ENCODE measurements at regions of chr20 and their contacts with region 1.

Region 1: DNA sequence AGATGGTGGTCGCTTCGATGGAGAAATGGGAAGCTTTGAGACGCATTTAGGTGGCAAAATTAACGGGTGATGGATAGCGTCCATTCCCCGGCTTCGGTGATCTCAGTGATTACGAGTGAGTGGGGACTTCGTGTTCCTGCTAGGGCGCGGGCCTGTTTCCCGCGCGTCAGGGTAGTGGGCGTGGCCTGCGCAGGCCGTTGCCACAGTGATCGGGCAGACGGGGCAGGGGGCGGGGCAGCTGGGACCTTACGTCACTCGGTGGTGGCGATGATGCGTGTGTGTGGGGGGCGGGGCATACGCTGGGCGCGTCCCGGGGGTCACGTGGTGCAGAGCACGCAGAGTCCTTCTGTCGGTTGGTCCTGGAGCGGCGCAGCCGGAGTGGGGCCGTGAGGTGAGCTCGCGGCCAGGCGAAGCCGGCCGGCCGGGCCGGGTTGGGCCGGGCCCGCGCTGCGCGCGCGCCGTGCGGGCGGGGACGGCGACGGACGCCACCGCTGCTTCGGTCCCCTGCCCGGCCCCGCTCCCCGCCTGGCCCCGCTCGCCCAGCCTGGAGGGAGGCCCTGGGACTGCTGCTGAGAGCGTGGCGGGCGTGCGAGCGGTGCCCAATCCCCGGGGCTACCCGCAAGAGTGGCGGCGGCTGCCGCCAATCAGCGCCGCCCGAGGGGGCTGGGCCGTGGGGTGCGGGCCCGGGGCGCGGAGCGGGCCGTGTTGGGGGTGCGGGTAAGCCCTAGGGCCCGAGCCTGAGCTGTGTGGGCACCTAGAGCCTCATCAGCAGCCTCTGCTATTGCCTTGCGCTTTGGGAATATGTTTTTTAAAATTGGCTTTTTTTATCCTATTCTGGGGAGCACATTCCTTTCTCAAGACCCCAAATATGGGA is at the start of gene PHF20:
- DNase-seq: peak; percentile 97 to 99 (median 99)
- H3K4me3 ChIP-seq: peak within 1 kb of the TSS; percentile 73 to 98 (median 94)
- H3K4me3 Mint-ChIP-seq: peak within 1 kb of the TSS; percentile 88 to 90
- H3K27ac ChIP-seq: peak within 1 kb of the TSS; percentile 87 to 95
- H3K27ac Mint-ChIP-seq: peak within 1 kb of the TSS; percentile 98 to 100 (median 99)
- H3K4me1 ChIP-seq: peaks cover 64 to 74% of the 10 kb centered on the region in 2 donors
- H3K4me1 Mint-ChIP-seq: peaks cover 72% of the 10 kb centered on the region
- H3K27me3 ChIP-seq: no peaks in the 10 kb centered on the region
- H3K27me3 Mint-ChIP-seq: peaks cover 0 to 6% (median 3%) of the 10 kb centered on the region in 3 donors
- CTCF ChIP-seq: no peak
- polyA plus RNA-seq, gene PHF20: 54.7 to 78.2 (median 73.6) TPM

Region 2: GRCh38 chr20:35729836-35730582 is 41.9 kb before region 1 on chr20:
- intact Hi-C with region 1: loop called in 1 of 2 experiments (anchors 5 kb)
- DNase-seq: no peak
- H3K4me3 ChIP-seq: no peak overlapping the region
- H3K4me3 Mint-ChIP-seq: no peak overlapping the region
- H3K27ac ChIP-seq: peak overlapping the region in 1 of 2 donors; percentile 32
- H3K27ac Mint-ChIP-seq: peak overlapping the region in 2 of 7 donors; percentile 20 to 32
- H3K4me1 ChIP-seq: no peaks in the 10 kb centered on the region
- H3K4me1 Mint-ChIP-seq: peaks cover 5% of the 10 kb centered on the region
- H3K27me3 ChIP-seq: no peaks in the 10 kb centered on the region
- H3K27me3 Mint-ChIP-seq: peaks cover 0 to 2% (median 0%) of the 10 kb centered on the region in 3 donors
- CTCF ChIP-seq: no peak

Region 3: DNA sequence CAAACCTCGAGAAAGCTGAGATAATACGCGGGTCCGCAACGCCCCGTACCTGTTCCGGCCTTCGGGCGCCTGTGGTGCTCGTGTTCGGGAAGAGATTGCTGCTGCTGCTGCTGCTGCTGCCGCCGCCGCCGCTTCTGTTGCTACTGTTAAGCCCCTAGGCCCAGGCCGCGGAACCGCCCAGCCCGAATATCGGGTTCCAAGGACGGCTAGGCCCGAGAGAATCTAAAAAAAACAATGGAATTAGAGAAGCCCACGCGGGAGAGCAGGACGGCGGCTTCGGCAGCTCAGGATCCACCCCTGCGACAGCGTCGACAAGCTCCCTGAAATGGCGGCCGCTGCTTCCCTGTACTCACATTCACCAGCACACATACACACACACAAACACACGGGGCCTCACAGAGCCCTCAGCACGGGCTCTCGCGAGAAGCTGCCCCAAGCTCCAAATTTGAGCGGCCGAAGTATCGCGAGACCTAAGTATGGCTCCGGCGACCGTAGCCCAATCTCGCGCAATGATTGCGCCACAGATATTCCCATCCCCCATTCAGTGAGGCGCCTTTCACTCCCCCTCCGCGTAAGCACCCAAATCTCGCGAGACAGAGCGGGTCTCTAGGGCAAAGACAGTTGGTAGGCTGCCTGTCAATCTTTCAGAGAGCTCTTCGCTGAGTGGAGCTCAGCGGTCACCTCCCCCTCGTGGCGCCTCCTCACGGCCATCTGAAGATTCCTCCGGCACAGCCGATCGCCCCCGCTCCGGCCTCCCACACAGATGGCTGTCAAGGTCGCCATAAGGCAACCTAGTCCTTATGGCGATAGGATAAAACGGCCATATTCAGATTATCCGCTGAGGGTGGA is 29.8 kb before region 1 on chr20 and contains the start of gene RBM39:
- intact Hi-C with region 1: loop called (anchors 1 kb)
- DNase-seq: peak; percentile 100
- H3K4me3 ChIP-seq: peak within 1 kb of the TSS; percentile 78 to 95 (median 91)
- H3K4me3 Mint-ChIP-seq: peak within 1 kb of the TSS; percentile 99 to 100
- H3K27ac ChIP-seq: peak within 1 kb of the TSS; percentile 99 to 100
- H3K27ac Mint-ChIP-seq: peak within 1 kb of the TSS; percentile 97 to 100 (median 100)
- H3K4me1 ChIP-seq: peaks cover 40 to 52% of the 10 kb centered on the region in 2 donors
- H3K4me1 Mint-ChIP-seq: peaks cover 42% of the 10 kb centered on the region
- H3K27me3 ChIP-seq: no peaks in the 10 kb centered on the region
- H3K27me3 Mint-ChIP-seq: no peaks in the 10 kb centered on the region
- CTCF ChIP-seq: no peak
- polyA plus RNA-seq, gene RBM39: 89.5 to 209 (median 98.0) TPM

Region 4: DNA sequence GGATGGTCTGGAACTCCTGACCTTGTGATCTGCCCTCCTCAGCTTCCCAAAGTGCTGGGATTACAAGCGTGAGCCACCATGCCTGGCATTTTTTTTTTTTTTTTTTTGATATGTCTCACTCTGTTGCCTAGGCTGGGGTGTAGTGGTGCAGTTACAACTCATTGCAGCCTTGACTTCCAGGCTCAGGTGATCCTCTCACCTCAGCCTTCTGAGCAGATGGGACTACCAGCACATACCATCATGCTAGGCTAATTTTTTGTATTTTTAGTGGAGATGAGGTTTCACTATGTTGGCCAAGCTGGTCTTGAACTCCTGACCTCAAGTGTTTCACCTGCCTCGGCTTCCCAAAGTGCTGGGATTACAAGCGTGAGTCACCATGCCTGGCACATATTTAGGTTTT is 34.1 kb after region 1 on chr20:
- intact Hi-C with region 1: no loop called
- DNase-seq: no peak
- H3K4me3 ChIP-seq: no peak overlapping the region
- H3K4me3 Mint-ChIP-seq: no peak overlapping the region
- H3K27ac ChIP-seq: no peak overlapping the region
- H3K27ac Mint-ChIP-seq: peak overlapping the region in 1 of 7 donors; percentile 9
- H3K4me1 ChIP-seq: no peaks in the 10 kb centered on the region
- H3K4me1 Mint-ChIP-seq: no peaks in the 10 kb centered on the region
- H3K27me3 ChIP-seq: no peaks in the 10 kb centered on the region
- H3K27me3 Mint-ChIP-seq: no peaks in the 10 kb centered on the region
- CTCF ChIP-seq: no peak

Measured in CD14-positive monocyte (primary cell).